ENCODE measurements at regions of chr5 and their contacts with region 1.

Region 1: GRCh38 chr5:73792687-73793320 is 166.8 kb downstream of the ARHGEF28 start:
- DNase-seq: peak; percentile 53 to 77
- H3K4me3 ChIP-seq: no peak overlapping the region
- H3K4me1 ChIP-seq: no peaks in the 10 kb centered on the region
- H3K27me3 ChIP-seq: peaks cover 6% of the 10 kb centered on the region; the same call in 1 of the 2 replicates

Region 2: DNA sequence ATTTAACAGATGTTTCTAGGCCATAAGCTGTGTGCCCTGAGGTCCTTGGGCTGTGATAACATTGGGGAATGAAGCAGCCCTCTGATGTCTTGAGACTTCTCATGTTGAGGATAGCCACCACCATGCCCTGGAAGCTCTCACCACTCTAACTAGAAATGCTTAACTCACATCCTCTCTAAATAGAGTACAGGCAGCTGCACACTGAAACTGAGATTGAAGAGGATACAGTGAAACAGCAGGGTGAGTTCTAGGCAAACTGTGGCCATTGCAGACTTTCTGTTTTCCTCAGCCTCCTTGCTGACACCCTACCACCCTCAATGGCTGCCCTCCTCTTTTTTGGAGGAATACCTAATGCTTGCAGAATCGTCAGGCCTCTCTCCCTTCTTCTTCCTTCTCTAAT is 204.9 kb before region 1 on chr5:
- in situ Hi-C with region 1: loop called (anchors 5 kb)
- DNase-seq: no peak
- H3K4me3 ChIP-seq: no peak overlapping the region
- H3K4me1 ChIP-seq: no peaks in the 10 kb centered on the region
- H3K27me3 ChIP-seq: peaks cover 2% of the 10 kb centered on the region; the same call in 1 of the 2 replicates